ENCODE measurements at regions of chr19 and their contacts with region 1.

Region 1: DNA sequence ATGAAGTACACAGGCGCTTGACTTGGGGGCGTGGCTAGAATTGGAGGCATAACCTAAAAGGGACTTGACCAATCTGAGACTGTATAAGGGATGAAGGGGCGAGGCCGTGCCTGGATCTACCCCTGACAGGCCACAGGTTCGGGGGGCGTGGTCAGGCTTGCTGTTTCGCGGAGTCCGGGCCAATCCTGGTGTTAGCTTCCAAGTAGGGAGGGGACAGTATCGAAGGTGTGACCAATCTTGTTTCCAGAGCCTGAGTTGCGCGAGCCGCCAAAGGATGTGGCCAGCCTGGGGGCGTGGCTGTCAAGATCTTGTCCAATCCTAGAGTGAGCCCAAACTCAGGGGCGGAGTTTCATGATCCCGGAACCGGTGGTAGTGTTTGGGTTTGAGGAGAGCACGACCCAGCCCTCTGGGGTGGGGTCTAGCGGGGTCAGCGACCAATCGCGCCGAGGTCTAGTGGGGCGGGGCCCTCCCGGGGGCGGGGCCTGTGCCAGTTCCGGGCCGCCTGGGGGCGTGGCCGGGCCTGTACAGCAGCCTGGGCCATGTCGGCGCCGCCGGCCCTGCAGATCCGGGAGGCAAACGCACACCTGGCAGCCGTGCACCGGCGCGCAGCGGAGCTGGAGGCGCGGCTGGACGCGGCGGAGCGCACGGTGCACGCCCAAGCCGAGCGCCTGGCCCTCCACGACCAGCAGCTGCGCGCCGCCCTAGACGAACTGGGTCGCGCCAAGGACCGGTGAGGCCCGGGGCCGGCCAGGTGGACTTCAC is at the start of gene VMAC:
- DNase-seq: peak; percentile 100
- H3K4me3 Mint-ChIP-seq: peak within 1 kb of the TSS; percentile 91
- H3K27ac Mint-ChIP-seq: peak within 1 kb of the TSS; percentile 99
- H3K4me1 Mint-ChIP-seq: peaks cover 29% of the 10 kb centered on the region
- H3K27me3 Mint-ChIP-seq: no peaks in the 10 kb centered on the region
- total RNA-seq, gene VMAC: 2.7 and 3.2 TPM in 2 replicates

Region 2: DNA sequence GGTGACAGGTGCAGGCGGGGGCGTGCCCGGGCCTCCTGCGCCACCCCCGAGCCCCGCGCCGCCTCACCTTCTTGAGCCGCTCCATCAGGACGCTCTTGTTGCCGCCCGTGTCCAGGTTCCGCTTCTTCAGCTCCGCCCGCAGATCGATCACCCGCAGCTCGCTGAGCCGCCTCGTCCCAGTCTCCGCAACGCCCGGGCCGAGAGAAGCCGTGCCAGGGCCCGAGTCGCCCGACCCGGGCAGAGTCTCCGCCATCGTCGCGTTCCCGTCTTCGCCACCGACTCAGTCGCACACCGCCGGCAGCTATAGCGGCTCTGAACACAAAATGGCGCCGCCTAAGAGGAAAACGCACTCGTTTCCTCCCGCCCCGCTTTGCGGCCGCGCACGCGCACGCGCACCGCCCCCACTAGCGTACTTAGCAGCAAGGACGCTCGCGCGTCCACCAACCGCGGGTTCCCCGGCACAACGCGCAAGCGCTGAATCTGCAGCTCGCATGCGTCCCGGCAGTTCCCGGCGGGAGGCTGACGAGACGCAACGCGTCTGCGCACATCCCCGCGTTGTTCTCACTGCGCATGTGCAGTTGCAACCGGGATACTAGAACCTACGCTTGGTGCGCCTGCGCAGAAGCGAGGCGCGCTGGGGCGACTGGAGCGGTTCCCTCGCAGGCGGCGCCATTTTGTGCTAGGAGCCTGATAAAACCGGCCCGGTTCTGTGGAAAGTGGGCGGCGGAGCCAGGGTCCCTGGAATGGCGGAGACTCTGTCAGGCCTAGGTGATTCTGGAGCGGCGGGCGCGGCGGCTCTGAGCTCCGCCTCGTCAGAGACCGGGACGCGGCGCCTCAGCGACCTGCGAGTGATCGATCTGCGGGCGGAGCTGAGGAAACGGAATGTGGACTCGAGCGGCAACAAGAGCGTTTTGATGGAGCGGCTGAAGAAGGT is 281.8 kb before region 1 on chr19 and contains the starts of genes SAFB and SAFB2:
- intact Hi-C with region 1: loop called (anchors 2 kb)
- DNase-seq: peak; percentile 100
- H3K4me3 Mint-ChIP-seq: peak within 1 kb of the TSS; percentile 100
- H3K27ac Mint-ChIP-seq: peak within 1 kb of the TSS; percentile 100
- H3K4me1 Mint-ChIP-seq: peaks cover 55% of the 10 kb centered on the region
- H3K27me3 Mint-ChIP-seq: peaks cover 3% of the 10 kb centered on the region
- total RNA-seq, gene SAFB: 142 and 143 TPM in 2 replicates
- total RNA-seq, gene SAFB2: 97.6 and 101 TPM in 2 replicates

Region 3: GRCh38 chr19:5690125-5690954 is 214.2 kb before region 1 on chr19 and contains the start of gene RPL36:
- intact Hi-C with region 1: loop called (anchors 1 kb)
- DNase-seq: peak; percentile 100
- H3K4me3 Mint-ChIP-seq: peak within 1 kb of the TSS; percentile 100
- H3K27ac Mint-ChIP-seq: peak within 1 kb of the TSS; percentile 98
- H3K4me1 Mint-ChIP-seq: peaks cover 23% of the 10 kb centered on the region
- H3K27me3 Mint-ChIP-seq: no peaks in the 10 kb centered on the region
- total RNA-seq, gene RPL36: 1,117 and 1,132 TPM in 2 replicates

Region 4: DNA sequence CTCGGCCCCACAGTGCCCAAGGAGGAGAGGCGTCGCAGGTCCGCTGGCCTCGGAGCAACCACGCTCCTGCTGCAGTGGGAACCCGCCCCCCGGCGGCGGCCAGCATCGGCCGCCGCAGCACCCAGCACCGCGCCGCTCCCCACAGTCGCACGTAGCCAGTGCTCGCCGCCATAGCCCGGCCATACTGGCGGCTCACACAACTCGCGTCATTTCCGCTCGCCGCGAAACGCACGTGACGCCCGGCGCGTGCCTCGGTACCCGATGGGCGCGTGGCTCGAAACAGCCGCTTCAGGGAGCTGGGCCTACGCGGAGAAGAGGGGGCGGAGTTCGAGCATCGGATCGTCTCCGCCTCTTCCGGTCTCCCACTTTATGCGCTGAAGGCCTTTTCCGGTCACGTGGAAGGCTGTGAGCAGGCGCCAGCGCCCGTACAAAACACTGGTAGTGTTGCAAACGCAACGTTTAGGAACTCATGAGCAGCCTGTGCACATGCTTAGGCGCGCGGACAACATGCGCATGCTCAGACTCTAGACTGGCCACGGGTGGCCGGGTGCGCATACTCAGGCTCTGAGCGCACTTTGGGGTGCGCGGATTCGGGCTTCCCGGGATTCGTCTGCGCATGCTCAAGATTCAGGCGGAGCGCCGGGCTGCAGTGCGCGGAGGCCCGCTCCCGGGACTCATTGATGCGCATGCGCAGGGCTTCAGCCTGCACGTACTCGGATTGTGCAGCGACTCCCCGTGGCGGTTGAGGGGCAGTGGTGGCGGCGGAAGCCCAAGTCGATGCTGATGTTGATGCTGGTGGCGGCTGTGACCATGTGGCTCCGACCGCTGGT is 184.4 kb before region 1 on chr19 and contains the starts of genes CATSPERD and LONP1:
- intact Hi-C with region 1: loop called (anchors 10 kb)
- DNase-seq: peak; percentile 99
- H3K4me3 Mint-ChIP-seq: peak within 1 kb of the TSS; percentile 97
- H3K27ac Mint-ChIP-seq: peak within 1 kb of the TSS; percentile 97
- H3K4me1 Mint-ChIP-seq: peaks cover 25% of the 10 kb centered on the region
- H3K27me3 Mint-ChIP-seq: no peaks in the 10 kb centered on the region
- total RNA-seq, gene CATSPERD: not detected in 2 replicates
- total RNA-seq, gene LONP1: 220 and 240 TPM in 2 replicates

Region 5: DNA sequence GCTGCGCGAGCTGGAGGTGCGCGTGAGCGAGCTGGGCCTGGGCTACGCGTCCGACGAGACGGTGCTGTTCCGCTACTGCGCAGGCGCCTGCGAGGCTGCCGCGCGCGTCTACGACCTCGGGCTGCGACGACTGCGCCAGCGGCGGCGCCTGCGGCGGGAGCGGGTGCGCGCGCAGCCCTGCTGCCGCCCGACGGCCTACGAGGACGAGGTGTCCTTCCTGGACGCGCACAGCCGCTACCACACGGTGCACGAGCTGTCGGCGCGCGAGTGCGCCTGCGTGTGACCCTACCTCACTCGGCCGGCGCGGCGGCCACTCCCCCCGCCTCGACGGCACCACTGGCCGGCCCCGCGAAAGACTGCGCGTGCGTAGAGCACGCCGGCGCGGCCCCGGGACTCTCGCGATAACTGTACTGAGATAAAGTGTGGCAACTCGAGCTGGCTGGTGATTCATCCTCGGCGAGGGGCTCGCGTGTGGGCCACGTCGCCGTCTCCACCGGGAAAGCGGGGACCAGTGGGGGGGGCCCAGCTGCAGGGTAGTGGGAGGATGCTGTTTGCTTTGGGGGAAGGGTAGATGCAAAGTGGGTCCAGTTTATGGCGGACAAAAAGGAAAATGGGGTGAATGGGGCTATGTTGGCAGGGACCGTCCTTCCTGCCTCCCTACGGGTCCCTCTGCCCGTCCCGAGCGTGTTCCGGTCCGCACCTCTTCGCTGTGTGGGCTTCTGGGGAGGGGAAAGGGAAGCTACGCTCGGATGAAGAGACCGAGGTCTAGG is 76.5 kb before region 1 on chr19:
- intact Hi-C with region 1: loop called (anchors 5 kb)
- DNase-seq: peak; percentile 99
- H3K4me3 Mint-ChIP-seq: peak overlapping the region; percentile 100
- H3K27ac Mint-ChIP-seq: peak overlapping the region; percentile 100
- H3K4me1 Mint-ChIP-seq: peaks cover 8% of the 10 kb centered on the region
- H3K27me3 Mint-ChIP-seq: no peaks in the 10 kb centered on the region

Region 6: GRCh38 chr19:5891938-5892771 is 12.4 kb before region 1 on chr19:
- intact Hi-C with region 1: no loop called
- DNase-seq: peak; percentile 71
- H3K4me3 Mint-ChIP-seq: no peak overlapping the region
- H3K27ac Mint-ChIP-seq: no peak overlapping the region
- H3K4me1 Mint-ChIP-seq: no peaks in the 10 kb centered on the region
- H3K27me3 Mint-ChIP-seq: peaks cover 3% of the 10 kb centered on the region

Region 7: DNA sequence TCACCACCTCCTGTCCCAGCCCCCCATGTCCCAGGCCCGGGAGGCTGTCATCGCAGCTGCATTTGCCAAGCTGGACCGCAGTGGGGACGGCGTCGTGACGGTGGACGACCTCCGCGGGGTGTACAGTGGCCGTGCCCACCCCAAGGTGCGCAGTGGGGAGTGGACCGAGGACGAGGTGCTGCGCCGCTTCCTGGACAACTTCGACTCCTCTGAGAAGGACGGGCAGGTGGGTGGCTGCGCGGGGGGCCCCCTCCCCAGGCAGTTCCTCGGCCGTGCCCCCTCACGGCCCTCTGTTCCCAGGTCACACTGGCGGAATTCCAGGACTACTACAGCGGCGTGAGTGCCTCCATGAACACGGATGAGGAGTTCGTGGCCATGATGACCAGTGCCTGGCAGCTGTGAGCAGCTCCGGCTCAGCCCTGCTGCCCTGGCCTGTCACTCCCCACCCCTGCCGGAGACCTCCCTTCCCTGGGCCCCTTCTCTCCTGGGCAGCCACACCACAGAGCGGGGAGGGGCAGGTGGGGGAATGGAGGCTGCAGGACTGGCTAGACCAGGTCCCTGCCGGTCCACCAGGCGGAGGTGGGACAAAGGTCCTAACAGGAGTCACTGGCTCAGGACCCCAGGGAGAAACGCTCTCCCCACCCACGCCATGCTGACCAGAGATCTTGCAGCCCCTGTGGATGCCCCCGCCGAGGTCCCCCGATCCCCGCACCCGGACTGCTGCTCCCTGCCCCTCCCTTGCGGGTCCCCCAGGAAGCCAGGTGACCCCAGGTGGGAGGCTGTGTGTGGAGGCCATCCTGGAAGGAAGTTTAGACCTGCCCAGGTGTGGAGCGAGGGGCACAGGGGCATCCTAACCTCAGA is 10.6 kb after region 1 on chr19:
- intact Hi-C with region 1: no loop called
- DNase-seq: no peak
- H3K4me3 Mint-ChIP-seq: no peak overlapping the region
- H3K27ac Mint-ChIP-seq: no peak overlapping the region
- H3K4me1 Mint-ChIP-seq: no peaks in the 10 kb centered on the region
- H3K27me3 Mint-ChIP-seq: no peaks in the 10 kb centered on the region

Region 8: DNA sequence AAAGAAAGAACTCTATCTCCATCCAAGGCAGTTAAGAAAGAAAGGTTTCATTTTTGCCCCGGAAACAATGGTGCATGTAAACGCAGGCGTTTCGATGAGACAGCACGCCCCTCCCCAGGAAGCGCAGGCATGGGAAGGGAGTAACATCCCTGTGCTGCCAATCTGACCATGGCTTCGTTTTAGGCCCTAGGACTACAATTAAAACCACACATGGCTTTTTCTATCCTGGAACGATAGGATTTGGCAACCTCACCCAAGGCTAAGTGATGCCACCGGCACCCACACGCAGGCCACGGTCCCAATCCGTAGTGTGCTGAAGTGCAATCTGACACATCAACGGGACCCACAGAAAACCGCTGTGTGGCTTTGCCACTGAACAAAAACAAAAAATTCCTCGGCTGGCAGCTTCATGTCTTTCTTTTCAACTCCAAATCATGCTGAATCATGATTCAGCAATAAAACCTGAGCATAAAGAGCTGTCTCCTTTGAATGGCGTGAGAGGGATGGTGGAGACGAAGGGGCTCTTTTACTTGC is 49.2 kb after region 1 on chr19:
- intact Hi-C with region 1: loop called (anchors 5 kb)
- DNase-seq: peak; percentile 84
- H3K4me3 Mint-ChIP-seq: peak overlapping the region; percentile 81
- H3K27ac Mint-ChIP-seq: peak overlapping the region; percentile 95
- H3K4me1 Mint-ChIP-seq: peaks cover 79% of the 10 kb centered on the region
- H3K27me3 Mint-ChIP-seq: no peaks in the 10 kb centered on the region

Region 9: GRCh38 chr19:5977785-5978605 is 73.5 kb after region 1 on chr19 and contains the start of gene RANBP3:
- intact Hi-C with region 1: loop called (anchors 1 kb)
- DNase-seq: peak; percentile 100
- H3K4me3 Mint-ChIP-seq: peak within 1 kb of the TSS; percentile 94
- H3K27ac Mint-ChIP-seq: peak within 1 kb of the TSS; percentile 93
- H3K4me1 Mint-ChIP-seq: peaks cover 55% of the 10 kb centered on the region
- H3K27me3 Mint-ChIP-seq: no peaks in the 10 kb centered on the region
- total RNA-seq, gene RANBP3: 105 and 114 TPM in 2 replicates

Region 10: GRCh38 chr19:6048808-6049405 is 144.4 kb after region 1 on chr19:
- intact Hi-C with region 1: no loop called
- DNase-seq: peak; percentile 93
- H3K4me3 Mint-ChIP-seq: no peak overlapping the region
- H3K27ac Mint-ChIP-seq: no peak overlapping the region
- H3K4me1 Mint-ChIP-seq: peaks cover 4% of the 10 kb centered on the region
- H3K27me3 Mint-ChIP-seq: peaks cover 7% of the 10 kb centered on the region